ENCODE measurements at regions of chrX and their contacts with region 1.

Region 1: DNA sequence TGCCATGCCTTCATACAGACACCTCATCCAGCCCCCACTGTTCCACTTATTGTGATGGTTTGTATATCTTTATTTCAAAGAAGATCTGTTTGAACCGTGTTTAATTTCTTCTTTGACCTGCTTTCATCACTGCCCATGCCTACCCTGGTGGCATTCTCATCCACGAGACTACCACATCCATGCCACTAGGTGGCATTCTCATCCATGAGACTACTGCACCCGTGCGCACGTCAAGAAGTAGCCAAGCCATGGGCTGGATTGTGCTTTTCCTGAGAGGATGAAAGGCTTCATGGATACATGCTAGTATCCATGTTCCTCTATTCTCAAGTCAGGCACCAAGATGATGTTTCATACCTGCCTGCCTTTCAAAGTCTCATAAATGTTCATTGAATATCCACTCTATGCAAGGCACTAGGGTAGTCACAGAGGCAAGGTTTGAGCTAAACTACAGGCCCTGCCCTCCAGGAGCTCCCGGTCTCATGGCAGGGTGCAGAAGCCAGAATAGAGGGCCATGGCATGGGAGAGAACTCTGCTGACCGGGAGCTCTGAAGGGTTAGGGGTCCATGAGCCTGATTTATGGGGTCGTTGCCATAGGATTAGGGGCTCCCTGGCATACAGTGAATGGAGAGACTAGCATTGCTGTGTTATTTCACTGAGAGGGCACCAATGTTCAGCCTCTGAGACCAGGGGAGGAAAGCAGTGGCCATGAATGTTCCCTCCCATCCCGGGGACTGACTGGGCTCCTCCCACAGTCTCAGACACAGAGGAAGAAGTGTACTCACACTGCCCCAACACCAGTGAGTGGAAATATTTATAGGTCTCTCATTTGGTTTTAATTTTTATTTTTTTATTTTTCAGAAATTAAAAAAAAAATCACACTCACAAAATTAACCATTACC is 24.8 kb upstream of the EOLA2 start:
- DNase-seq: peak; percentile 38 to 43
- H3K4me3 ChIP-seq: no peak overlapping the region
- H3K4me3 Mint-ChIP-seq: peak overlapping the region; percentile 6
- H3K27ac Mint-ChIP-seq: peak overlapping the region; percentile 63
- H3K4me1 ChIP-seq: no peaks in the 10 kb centered on the region
- H3K4me1 Mint-ChIP-seq: no peaks in the 10 kb centered on the region
- H3K27me3 ChIP-seq: no peaks in the 10 kb centered on the region
- H3K27me3 Mint-ChIP-seq: no peaks in the 10 kb centered on the region
- CTCF ChIP-seq: peak; percentile 20 to 41

Region 2: GRCh38 chrX:149572743-149573142 is 390.4 kb before region 1 on chrX:
- CTCF ChIA-PET with region 1: no interaction called
- POLR2A ChIA-PET with region 1: no interaction called
- intact Hi-C with region 1: no loop called
- DNase-seq: no peak
- H3K4me3 ChIP-seq: no peak overlapping the region
- H3K4me3 Mint-ChIP-seq: no peak overlapping the region
- H3K27ac Mint-ChIP-seq: no peak overlapping the region
- H3K4me1 ChIP-seq: no peaks in the 10 kb centered on the region
- H3K4me1 Mint-ChIP-seq: no peaks in the 10 kb centered on the region
- H3K27me3 ChIP-seq: no peaks in the 10 kb centered on the region
- H3K27me3 Mint-ChIP-seq: no peaks in the 10 kb centered on the region
- CTCF ChIP-seq: no peak

Region 3: GRCh38 chrX:150032741-150033140 is 69.6 kb after region 1 on chrX:
- CTCF ChIA-PET with region 1: no interaction called
- POLR2A ChIA-PET with region 1: no interaction called
- intact Hi-C with region 1: no loop called
- DNase-seq: no peak
- H3K4me3 ChIP-seq: no peak overlapping the region
- H3K4me3 Mint-ChIP-seq: no peak overlapping the region
- H3K27ac Mint-ChIP-seq: no peak overlapping the region
- H3K4me1 ChIP-seq: no peaks in the 10 kb centered on the region
- H3K4me1 Mint-ChIP-seq: no peaks in the 10 kb centered on the region
- H3K27me3 ChIP-seq: no peaks in the 10 kb centered on the region
- H3K27me3 Mint-ChIP-seq: no peaks in the 10 kb centered on the region
- CTCF ChIP-seq: no peak

Region 4: GRCh38 chrX:150049647-150050046 is 86.5 kb after region 1 on chrX:
- CTCF ChIA-PET with region 1: no interaction called
- POLR2A ChIA-PET with region 1: no interaction called
- intact Hi-C with region 1: loop called (anchors 1 kb)
- DNase-seq: no peak
- H3K4me3 ChIP-seq: no peak overlapping the region
- H3K4me3 Mint-ChIP-seq: no peak overlapping the region
- H3K27ac Mint-ChIP-seq: no peak overlapping the region
- H3K4me1 ChIP-seq: no peaks in the 10 kb centered on the region
- H3K4me1 Mint-ChIP-seq: no peaks in the 10 kb centered on the region
- H3K27me3 ChIP-seq: no peaks in the 10 kb centered on the region; the same call in 1 of the 2 replicates
- H3K27me3 Mint-ChIP-seq: peaks cover 4% of the 10 kb centered on the region
- CTCF ChIP-seq: no peak

Region 5: GRCh38 chrX:150405576-150405975 is 442.5 kb after region 1 on chrX:
- CTCF ChIA-PET with region 1: no interaction called
- POLR2A ChIA-PET with region 1: no interaction called
- intact Hi-C with region 1: loop called (anchors 5 kb)
- DNase-seq: peak in 1 of 2 experiments; percentile 19
- H3K4me3 ChIP-seq: no peak overlapping the region
- H3K4me3 Mint-ChIP-seq: no peak overlapping the region
- H3K27ac Mint-ChIP-seq: no peak overlapping the region
- H3K4me1 ChIP-seq: no peaks in the 10 kb centered on the region
- H3K4me1 Mint-ChIP-seq: no peaks in the 10 kb centered on the region
- H3K27me3 ChIP-seq: no peaks in the 10 kb centered on the region
- H3K27me3 Mint-ChIP-seq: no peaks in the 10 kb centered on the region
- CTCF ChIP-seq: peak in 1 of 2 experiments; percentile 29

Region 6: GRCh38 chrX:150486011-150486410 is 522.9 kb after region 1 on chrX:
- CTCF ChIA-PET with region 1: no interaction called
- POLR2A ChIA-PET with region 1: no interaction called
- intact Hi-C with region 1: loop called (anchors 2 kb)
- DNase-seq: peak in 1 of 2 experiments; percentile 35
- H3K4me3 ChIP-seq: no peak overlapping the region
- H3K4me3 Mint-ChIP-seq: no peak overlapping the region
- H3K27ac Mint-ChIP-seq: no peak overlapping the region
- H3K4me1 ChIP-seq: no peaks in the 10 kb centered on the region
- H3K4me1 Mint-ChIP-seq: no peaks in the 10 kb centered on the region
- H3K27me3 ChIP-seq: no peaks in the 10 kb centered on the region
- H3K27me3 Mint-ChIP-seq: no peaks in the 10 kb centered on the region
- CTCF ChIP-seq: peak; percentile 14 to 67

Region 7: GRCh38 chrX:150683536-150684146 is 720.5 kb after region 1 on chrX:
- CTCF ChIA-PET with region 1: no interaction called
- POLR2A ChIA-PET with region 1: no interaction called
- intact Hi-C with region 1: loop called (anchors 2 kb)
- DNase-seq: peak in 1 of 2 experiments; percentile 29
- H3K4me3 ChIP-seq: no peak overlapping the region
- H3K4me3 Mint-ChIP-seq: no peak overlapping the region
- H3K27ac Mint-ChIP-seq: no peak overlapping the region
- H3K4me1 ChIP-seq: peaks cover 4% of the 10 kb centered on the region; the same call in 1 of the 2 replicates
- H3K4me1 Mint-ChIP-seq: no peaks in the 10 kb centered on the region
- H3K27me3 ChIP-seq: no peaks in the 10 kb centered on the region
- H3K27me3 Mint-ChIP-seq: no peaks in the 10 kb centered on the region
- CTCF ChIP-seq: peak in 1 of 2 experiments; percentile 50